K562 (cell line): ENCODE measurements at regions of chr6 and their contacts with region 1.

Region 1: GRCh38 chr6:90458353-90459224 is 128.3 kb downstream of the MAP3K7 start:
- DNase-seq: peak; percentile 78 to 95 (median 85)
- ATAC-seq: peak; percentile 90
- H3K4me3 ChIP-seq: peak overlapping the region; percentile 20; the same call in 1 of the 2 replicates
- H3K27ac ChIP-seq: peak overlapping the region; percentile 92
- H3K4me1 ChIP-seq: peaks cover 20 to 56% of the 10 kb centered on the region in 2 experiments
- H3K27me3 ChIP-seq: no peaks in the 10 kb centered on the region
- CTCF ChIP-seq: no peak
- EP300 ChIP-seq: peak; percentile 90
- POLR2A ChIP-seq: peak; percentile 67
- RAD21 ChIP-seq: peak in 1 of 2 experiments; percentile 38; a peak in 2 of 4 replicates

Region 2: GRCh38 chr6:90403489-90404381 is 54.9 kb before region 1 on chr6:
- CTCF ChIA-PET with region 1: no interaction called
- POLR2A ChIA-PET with region 1: interaction called, 7 read pairs
- in situ Hi-C with region 1: no loop called
- intact Hi-C with region 1: loop called (anchors 1 kb)
- DNase-seq: peak; percentile 76 to 93 (median 84)
- ATAC-seq: peak; percentile 96
- H3K4me3 ChIP-seq: no peak overlapping the region
- H3K27ac ChIP-seq: peak overlapping the region; percentile 62
- H3K4me1 ChIP-seq: peaks cover 30 to 40% of the 10 kb centered on the region in 2 experiments; a peak in 4 of 5 replicates
- H3K27me3 ChIP-seq: no peaks in the 10 kb centered on the region
- CTCF ChIP-seq: peak; percentile 9 to 28 (median 17); a peak in 1 of 6 replicates
- EP300 ChIP-seq: peak; percentile 71
- POLR2A ChIP-seq: no peak
- RAD21 ChIP-seq: peak; percentile 21 to 42; a peak in 2 of 4 replicates

Region 3: DNA sequence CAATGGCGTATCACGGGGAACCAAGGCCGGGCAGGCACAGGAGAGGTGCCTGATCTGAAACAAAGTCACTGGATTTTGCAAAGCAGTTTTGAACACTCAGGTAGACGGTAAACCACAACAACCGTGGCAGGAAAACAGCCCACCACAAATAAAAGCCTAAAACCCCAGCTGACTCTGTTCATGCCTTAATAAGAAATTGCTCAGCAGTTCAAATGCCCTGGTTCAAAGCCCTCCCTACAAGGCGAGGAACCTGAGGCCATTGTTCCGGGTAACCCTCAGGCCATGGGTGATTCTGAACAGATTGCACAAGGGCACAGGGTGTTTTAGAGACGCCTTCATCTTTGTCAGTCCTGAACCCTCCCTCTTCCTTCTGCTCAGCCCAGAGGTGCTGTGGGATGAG is 14.2 kb after region 1 on chr6:
- CTCF ChIA-PET with region 1: no interaction called
- POLR2A ChIA-PET with region 1: interaction called, 10 read pairs
- in situ Hi-C with region 1: no loop called
- intact Hi-C with region 1: no loop called
- DNase-seq: no peak
- ATAC-seq: no peak
- H3K4me3 ChIP-seq: no peak overlapping the region
- H3K27ac ChIP-seq: no peak overlapping the region
- H3K4me1 ChIP-seq: peaks cover 5 to 27% of the 10 kb centered on the region in 2 experiments
- H3K27me3 ChIP-seq: no peaks in the 10 kb centered on the region
- CTCF ChIP-seq: no peak
- EP300 ChIP-seq: no peak
- POLR2A ChIP-seq: no peak
- RAD21 ChIP-seq: no peak